Endothelial cell of umbilical vein (primary cell): ENCODE measurements at regions of chr4 and their contacts with region 1.

Region 1: GRCh38 chr4:2843263-2843940 is at the start of gene ADD1:
- DNase-seq: peak; percentile 99
- H3K4me3 ChIP-seq: peak within 1 kb of the TSS; percentile 70 to 95 (median 84)
- H3K27ac ChIP-seq: peak within 1 kb of the TSS; percentile 70
- H3K4me1 ChIP-seq: peaks cover 22% of the 10 kb centered on the region
- H3K27me3 ChIP-seq: no peaks in the 10 kb centered on the region
- CTCF ChIP-seq: no peak
- POLR2A ChIP-seq: peak; percentile 85
- total RNA-seq, gene ADD1: 280 and 305 TPM in 2 replicates

Region 2: DNA sequence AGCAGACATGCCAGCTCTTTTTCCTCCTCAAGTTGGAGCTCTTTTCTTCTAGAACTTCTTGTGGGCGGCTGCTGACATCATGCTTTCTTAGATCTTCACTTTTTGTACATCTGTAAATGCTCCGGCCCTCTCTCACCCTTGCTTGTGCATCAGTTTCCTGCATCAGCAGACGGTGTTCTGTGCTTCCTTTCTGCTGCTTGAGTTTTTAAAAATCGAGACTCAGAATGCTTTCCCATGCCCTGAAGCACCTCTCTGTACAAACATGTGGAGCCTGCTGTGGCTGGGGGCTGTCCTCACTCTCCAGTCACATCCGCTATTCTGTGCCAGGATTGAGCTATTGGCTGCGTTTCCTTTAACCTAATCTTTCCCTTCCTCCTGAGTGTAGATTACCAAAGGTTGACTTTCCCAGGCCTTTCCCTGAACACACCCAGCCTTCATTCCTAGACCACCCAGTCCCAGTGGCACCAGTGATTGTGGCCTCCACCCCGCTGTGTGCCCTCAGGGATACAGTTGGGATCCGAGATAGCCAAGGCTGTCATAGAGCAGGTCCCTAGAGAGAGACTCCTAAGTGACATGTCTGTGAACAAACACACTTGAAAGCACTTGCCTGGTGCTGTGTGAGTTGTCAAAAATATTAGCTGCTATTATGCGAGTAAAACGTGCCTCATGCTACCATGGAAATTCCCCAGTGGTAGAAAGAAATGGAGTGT is 129.2 kb before region 1 on chr4:
- CTCF ChIA-PET with region 1: no interaction called
- POLR2A ChIA-PET with region 1: interaction called, 10 read pairs
- dilution Hi-C with region 1: no loop called
- intact Hi-C with region 1: no loop called
- DNase-seq: peak; percentile 99
- H3K4me3 ChIP-seq: no peak overlapping the region
- H3K27ac ChIP-seq: peak overlapping the region; percentile 94
- H3K4me1 ChIP-seq: peaks cover 23% of the 10 kb centered on the region
- H3K27me3 ChIP-seq: no peaks in the 10 kb centered on the region
- CTCF ChIP-seq: no peak
- POLR2A ChIP-seq: no peak

Region 3: GRCh38 chr4:2817701-2818350 is 25.6 kb before region 1 on chr4:
- CTCF ChIA-PET with region 1: interaction called, 3 read pairs
- POLR2A ChIA-PET with region 1: no interaction called
- dilution Hi-C with region 1: no loop called
- intact Hi-C with region 1: loop called (anchors 1 kb)
- DNase-seq: peak; percentile 22
- H3K4me3 ChIP-seq: peak overlapping the region in 1 of 3 experiments; percentile 54
- H3K27ac ChIP-seq: no peak overlapping the region
- H3K4me1 ChIP-seq: peaks cover 10% of the 10 kb centered on the region
- H3K27me3 ChIP-seq: no peaks in the 10 kb centered on the region
- CTCF ChIP-seq: no peak
- POLR2A ChIP-seq: no peak

Region 4: DNA sequence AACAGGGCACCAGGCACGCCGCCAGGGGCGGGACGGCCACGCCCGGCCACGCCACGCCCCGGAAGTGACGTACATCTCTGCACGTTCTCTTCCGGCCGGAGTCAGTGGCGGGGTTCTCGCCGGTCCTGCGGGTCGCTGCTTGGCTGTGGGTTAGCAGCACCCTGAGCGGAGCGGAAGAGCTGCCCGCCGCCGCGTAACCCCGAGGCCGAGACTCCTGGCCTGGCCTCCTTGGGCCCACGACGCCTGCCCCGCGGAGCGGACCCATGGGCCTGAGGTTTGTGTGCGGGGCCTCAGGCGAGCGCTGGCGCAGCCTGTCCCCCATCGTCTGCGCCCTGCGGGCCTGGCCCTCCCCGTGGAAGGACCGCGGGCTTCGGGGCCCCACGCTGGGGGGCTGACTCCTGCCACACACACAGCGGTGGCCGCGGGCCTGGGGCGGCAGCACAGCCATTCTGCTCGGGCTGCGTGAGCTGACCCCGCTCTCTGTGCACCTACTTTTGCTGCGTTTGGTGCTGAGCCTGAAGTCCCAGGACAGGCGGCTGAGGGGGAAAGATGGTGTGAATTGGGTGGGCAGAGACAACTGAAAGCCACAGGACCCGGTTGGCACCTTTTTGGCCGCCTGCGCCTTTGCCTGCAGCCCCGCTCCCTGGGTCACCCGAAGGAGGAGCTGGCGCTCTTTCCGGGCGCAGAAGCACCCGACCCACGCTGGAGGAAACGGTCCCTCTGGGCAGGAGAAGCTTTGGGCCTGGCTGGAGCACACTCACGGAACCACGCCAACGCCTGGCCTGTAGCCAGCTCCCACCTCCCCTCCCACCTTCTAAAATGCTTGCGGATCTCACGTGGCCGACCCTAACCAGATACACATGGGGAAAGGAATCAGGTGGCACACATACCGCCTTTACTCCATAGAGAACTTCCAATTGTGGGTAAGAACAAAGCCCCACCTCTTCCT is 91.7 kb after region 1 on chr4:
- CTCF ChIA-PET with region 1: no interaction called
- POLR2A ChIA-PET with region 1: no interaction called
- dilution Hi-C with region 1: no loop called
- intact Hi-C with region 1: loop called (anchors 5 kb)
- DNase-seq: peak; percentile 86
- H3K4me3 ChIP-seq: peak overlapping the region; percentile 37 to 69 (median 65)
- H3K27ac ChIP-seq: peak overlapping the region; percentile 61
- H3K4me1 ChIP-seq: peaks cover 28% of the 10 kb centered on the region
- H3K27me3 ChIP-seq: no peaks in the 10 kb centered on the region
- CTCF ChIP-seq: no peak
- POLR2A ChIP-seq: peak; percentile 86